HEK293T (cell line): ENCODE measurements at regions of chr5 and their contacts with region 1.

Region 1: DNA sequence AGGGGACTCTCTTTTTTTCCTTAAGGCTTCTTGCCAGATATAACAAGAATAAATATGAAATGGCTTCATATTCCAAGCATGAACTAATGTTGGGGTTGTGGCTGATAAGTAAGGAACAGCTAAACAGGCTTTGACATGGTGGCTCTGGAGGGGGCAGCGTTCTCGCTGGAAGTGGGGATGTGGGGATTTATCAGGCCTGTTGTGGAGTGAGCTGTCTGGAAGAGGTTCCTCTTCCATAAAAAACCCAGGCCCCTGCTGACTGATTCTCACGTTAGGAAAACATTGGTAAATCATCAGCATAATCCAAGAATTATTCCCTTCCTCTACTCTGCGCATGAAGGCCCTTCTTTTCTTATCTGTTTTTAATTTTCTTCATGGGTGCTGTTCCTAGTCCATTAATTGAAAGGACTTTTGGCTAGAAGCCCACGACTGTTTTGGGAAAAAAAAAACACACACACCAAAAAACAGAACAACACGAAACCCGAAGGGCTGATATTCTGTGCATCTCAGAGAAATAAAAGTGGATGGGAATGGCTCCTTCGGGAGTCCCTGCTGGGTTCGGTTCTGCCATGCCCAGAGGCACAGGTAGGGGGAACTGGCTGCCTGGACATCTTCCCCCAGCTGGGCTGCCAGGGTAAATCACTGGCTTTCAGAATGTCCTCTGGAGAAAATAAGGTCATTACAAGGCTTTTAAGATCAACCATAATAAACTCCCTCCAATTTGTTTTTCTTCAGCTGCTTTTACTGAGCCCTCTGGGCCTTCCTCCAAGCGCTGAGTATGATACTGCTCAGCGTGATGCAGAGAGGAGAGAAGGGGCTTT is 297.0 kb downstream of the SLIT3 start:
- DNase-seq: peak; percentile 72

Region 2: GRCh38 chr5:168976311-168976970 is 27.5 kb before region 1 on chr5:
- CTCF ChIA-PET with region 1: no interaction called
- POLR2A ChIA-PET with region 1: no interaction called
- DNase-seq: no peak

Region 3: GRCh38 chr5:169258372-169259000 is 254.6 kb after region 1 on chr5:
- CTCF ChIA-PET with region 1: interaction called, 11 read pairs
- POLR2A ChIA-PET with region 1: no interaction called
- DNase-seq: no peak